ENCODE measurements at regions of chr4 and their contacts with region 1.

Region 1: GRCh38 chr4:21765810-21766407 is 182.7 kb downstream of the KCNIP4 start:
- DNase-seq: no peak
- ATAC-seq: peak in 2 of 4 donors; percentile 50 to 53
- H3K4me3 ChIP-seq: no peak overlapping the region
- H3K27ac ChIP-seq: no peak overlapping the region
- H3K4me1 ChIP-seq: peaks cover 0 to 2% (median 0%) of the 10 kb centered on the region in 12 donors
- H3K27me3 ChIP-seq: peaks cover 0 to 8% (median 0%) of the 10 kb centered on the region in 9 donors
- CTCF ChIP-seq: peak; percentile 59 to 86 (median 78)
- POLR2A ChIP-seq: no peak

Region 2: GRCh38 chr4:21512353-21512752 is 253.6 kb before region 1 on chr4:
- intact Hi-C with region 1: loop called (anchors 1 to 5 kb)
- DNase-seq: no peak
- ATAC-seq: no peak
- H3K4me3 ChIP-seq: no peak overlapping the region
- H3K27ac ChIP-seq: no peak overlapping the region
- H3K4me1 ChIP-seq: no peaks in the 10 kb centered on the region
- H3K27me3 ChIP-seq: peaks cover 0 to 7% (median 0%) of the 10 kb centered on the region in 9 donors
- CTCF ChIP-seq: peak in 7 of 12 donors; percentile 11 to 62 (median 48)
- POLR2A ChIP-seq: no peak

Measured in heart left ventricle (tissue), 16 donors.